Panc1 (cell line): ENCODE measurements at regions of chr1 and their contacts with region 1.

Region 1: GRCh38 chr1:24847995-24848881 is 81.8 kb downstream of the RUNX3 start:
- DNase-seq: peak; percentile 66
- ATAC-seq: peak; percentile 94
- H3K4me3 ChIP-seq: peak overlapping the region; percentile 52 to 64
- H3K27ac ChIP-seq: 0 out of 2 replicates have a peak overlapping the region, but pooled peaks have one; percentile 18
- H3K4me1 ChIP-seq: peaks cover 3% of the 10 kb centered on the region; the same call in 1 of the 2 replicates
- H3K27me3 ChIP-seq: no peaks in the 10 kb centered on the region
- CTCF ChIP-seq: peak; percentile 96

Region 2: DNA sequence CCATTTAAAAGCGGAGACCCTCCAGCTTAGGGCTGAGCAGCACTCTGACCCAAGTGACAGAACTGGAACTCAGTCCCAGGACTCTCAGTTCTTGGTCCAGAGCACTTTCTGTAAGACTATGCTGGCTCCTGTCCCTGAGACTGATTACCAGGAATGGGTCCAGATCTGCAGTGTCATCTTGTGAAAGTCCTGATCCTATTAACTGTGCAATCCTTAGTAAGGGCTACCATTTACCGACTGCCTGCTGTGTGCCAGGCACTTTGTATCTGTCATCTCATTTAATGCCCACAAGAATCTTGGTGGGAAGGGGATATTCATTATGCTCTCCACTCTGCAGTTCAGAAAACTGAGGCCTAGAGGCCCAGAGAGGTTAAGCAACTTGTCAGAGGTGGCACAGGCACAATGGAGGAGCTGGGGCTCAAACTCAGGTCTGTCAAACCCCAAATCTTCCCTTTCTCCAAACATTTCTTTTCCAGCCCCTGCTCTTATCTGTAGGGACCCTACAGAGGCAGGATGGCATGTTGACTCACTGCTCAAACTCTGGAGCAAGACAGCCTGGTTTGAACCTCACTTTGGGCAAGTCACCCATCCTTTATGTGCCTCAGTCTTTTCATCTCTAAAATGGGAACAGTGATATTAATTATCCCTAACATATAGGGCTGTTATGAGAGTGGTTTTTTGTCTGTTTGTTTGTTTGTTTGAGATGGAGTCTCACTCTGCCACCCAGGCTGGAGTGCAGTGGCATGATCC is 603.5 kb before region 1 on chr1:
- CTCF ChIA-PET with region 1: no interaction called
- POLR2A ChIA-PET with region 1: interaction called, 18 read pairs
- in situ Hi-C with region 1: no loop called
- intact Hi-C with region 1: no loop called
- DNase-seq: no peak
- ATAC-seq: peak; percentile 43; the same call in 1 of the 2 replicates
- H3K4me3 ChIP-seq: no peak overlapping the region
- H3K27ac ChIP-seq: no peak overlapping the region
- H3K4me1 ChIP-seq: no peaks in the 10 kb centered on the region
- H3K27me3 ChIP-seq: no peaks in the 10 kb centered on the region
- CTCF ChIP-seq: no peak

Region 3: DNA sequence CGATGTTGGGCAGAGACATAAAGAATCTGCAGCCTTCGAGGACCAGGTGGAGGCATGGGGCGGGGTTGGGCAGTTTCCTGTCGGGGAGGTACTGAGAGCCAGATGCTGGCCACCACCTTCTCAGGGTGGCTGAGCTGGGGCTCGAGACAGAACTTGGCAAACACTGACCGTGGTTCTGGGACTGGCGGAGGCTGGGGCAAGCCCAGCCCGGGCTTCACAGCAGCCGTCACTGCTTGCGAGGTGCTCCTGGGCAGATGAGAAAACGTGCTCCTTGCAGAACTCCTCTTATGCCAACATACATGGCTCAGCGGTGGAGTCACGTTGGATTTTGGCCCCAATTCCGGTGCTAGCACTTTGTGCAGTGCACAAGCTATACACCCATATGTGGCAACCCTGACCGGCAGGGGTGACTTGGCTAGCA is 12.6 kb after region 1 on chr1:
- CTCF ChIA-PET with region 1: interaction called, 11 read pairs
- POLR2A ChIA-PET with region 1: no interaction called
- in situ Hi-C with region 1: no loop called
- intact Hi-C with region 1: no loop called
- DNase-seq: no peak
- ATAC-seq: no peak
- H3K4me3 ChIP-seq: no peak overlapping the region
- H3K27ac ChIP-seq: no peak overlapping the region
- H3K4me1 ChIP-seq: no peaks in the 10 kb centered on the region; the same call in 1 of the 2 replicates
- H3K27me3 ChIP-seq: no peaks in the 10 kb centered on the region
- CTCF ChIP-seq: no peak

Region 4: GRCh38 chr1:25054526-25055323 is 206.5 kb after region 1 on chr1:
- CTCF ChIA-PET with region 1: no interaction called
- POLR2A ChIA-PET with region 1: no interaction called
- in situ Hi-C with region 1: no loop called
- intact Hi-C with region 1: no loop called
- DNase-seq: no peak
- ATAC-seq: no peak
- H3K4me3 ChIP-seq: no peak overlapping the region
- H3K27ac ChIP-seq: no peak overlapping the region
- H3K4me1 ChIP-seq: no peaks in the 10 kb centered on the region
- H3K27me3 ChIP-seq: peaks cover 6% of the 10 kb centered on the region
- CTCF ChIP-seq: no peak

Region 5: DNA sequence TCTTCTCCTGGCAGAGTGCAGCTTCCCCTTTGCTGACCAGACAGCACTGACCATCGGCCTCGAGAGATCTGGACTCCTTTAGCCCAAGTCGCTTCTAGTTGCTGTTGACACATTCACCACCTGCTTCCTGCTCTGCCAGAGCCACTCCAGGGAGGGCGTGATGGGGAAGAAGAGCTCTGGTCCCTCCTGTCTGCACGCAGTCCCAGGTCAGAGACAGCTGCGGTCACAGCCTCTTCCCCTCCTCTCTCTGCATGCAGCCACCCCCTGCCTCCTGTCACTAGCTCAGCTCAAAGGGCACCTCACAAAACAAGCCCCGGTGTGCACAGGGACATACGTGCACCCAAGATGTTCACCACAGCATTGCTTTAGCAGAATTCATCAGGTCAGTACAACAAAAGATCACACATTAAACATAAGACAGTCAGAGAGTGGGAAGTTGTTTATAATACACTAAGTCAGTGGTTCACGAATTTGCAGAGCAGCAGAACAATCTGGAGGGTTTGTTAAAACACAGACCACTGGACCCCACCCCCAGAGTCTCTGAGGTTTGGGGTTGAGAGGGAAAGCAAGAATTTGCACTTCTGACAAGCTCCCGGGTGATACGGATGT is 251.2 kb after region 1 on chr1:
- CTCF ChIA-PET with region 1: no interaction called
- POLR2A ChIA-PET with region 1: no interaction called
- in situ Hi-C with region 1: no loop called
- intact Hi-C with region 1: loop called (anchors 2 kb)
- DNase-seq: no peak
- ATAC-seq: no peak
- H3K4me3 ChIP-seq: no peak overlapping the region
- H3K27ac ChIP-seq: no peak overlapping the region
- H3K4me1 ChIP-seq: 0 out of 2 replicates have a peak, but pooled peaks cover 3% of the 10 kb centered on the region
- H3K27me3 ChIP-seq: no peaks in the 10 kb centered on the region
- CTCF ChIP-seq: no peak

Region 6: DNA sequence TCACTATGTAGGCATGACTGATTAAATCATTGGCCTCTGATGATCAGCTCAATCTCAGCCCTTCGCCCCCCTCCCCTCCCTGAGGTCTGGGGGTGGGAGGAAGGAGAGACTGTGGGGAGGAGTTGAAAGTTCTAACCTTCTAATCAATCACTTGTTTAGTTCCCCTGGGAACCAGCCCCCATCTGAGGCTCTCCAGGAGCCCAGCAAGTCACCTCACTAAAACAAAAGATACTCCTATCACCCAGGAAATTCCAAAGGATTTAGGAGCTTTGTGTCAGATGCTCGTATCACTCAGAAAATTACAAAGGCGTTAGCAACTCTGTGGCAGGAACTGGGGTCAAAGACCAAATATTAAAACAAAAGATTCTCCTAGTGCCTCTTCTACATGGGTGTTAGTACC is 362.5 kb after region 1 on chr1:
- CTCF ChIA-PET with region 1: interaction called, 21 read pairs
- POLR2A ChIA-PET with region 1: no interaction called
- in situ Hi-C with region 1: no loop called
- intact Hi-C with region 1: loop called (anchors 5 kb)
- DNase-seq: no peak
- ATAC-seq: no peak
- H3K4me3 ChIP-seq: no peak overlapping the region
- H3K27ac ChIP-seq: no peak overlapping the region
- H3K4me1 ChIP-seq: no peaks in the 10 kb centered on the region
- H3K27me3 ChIP-seq: no peaks in the 10 kb centered on the region
- CTCF ChIP-seq: no peak